Ascending aorta (tissue), 2 donors: ENCODE measurements at regions of chr12 and their contacts with region 1.

Region 1: DNA sequence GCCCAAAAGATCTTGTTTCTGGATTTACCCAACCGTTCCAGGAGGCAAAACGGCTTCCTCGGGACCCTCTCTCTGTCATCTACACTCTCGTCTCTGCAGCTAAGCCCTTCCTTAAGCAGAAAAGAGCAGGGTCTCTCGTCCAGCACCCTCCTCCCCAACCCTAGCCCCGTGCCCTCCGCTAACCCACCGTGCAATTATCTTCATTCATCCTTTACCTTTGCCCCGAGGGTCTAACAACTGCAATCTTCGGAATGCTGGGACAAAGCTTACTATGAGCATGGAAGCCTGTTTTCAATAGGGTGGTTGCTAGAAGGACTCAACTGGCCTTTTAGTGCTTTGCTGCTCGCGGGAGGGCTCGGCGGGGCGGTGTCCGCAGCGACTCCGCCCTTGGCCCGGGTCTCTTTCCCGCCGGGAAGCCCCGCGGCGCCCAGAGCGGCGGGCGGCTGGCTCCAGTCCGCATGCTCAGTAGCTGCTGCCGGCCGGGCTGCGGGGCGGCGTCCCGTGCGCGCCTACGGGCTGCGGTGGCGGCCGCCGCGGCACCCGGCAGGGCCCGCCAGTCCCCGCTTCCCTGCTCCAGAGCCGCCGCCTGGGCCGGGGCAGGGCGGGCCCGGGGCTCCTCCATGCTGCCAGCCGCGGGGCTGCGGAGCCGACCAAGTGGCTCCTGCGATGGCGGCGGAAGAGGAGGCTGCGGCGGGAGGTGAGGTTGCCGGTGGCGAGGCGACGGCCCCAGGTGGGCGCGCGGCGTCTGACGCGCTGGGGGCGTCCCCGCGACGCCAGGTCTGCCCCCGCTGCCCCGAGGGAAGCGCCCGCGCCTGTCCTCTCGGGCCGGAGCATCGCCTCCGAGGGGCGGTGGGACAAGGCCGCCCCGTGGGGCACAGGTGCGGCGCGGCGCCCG is at the start of gene BMAL2:
- DNase-seq: peak in 1 of 2 donors; percentile 69
- H3K4me3 ChIP-seq: peak within 1 kb of the TSS; percentile 86 to 89
- H3K27ac ChIP-seq: peak within 1 kb of the TSS; percentile 14 to 60
- H3K4me1 ChIP-seq: peaks cover 0 to 18% of the 10 kb centered on the region in 2 donors
- H3K27me3 ChIP-seq: no peaks in the 10 kb centered on the region
- CTCF ChIP-seq: no peak
- total RNA-seq, gene BMAL2: 5.6 TPM

Region 2: GRCh38 chr12:26937875-26938700 is 394.6 kb before region 1 on chr12 and contains the starts of genes FGFR1OP2 and INTS13:
- intact Hi-C with region 1: loop called (anchors 5 kb)
- DNase-seq: peak; percentile 97 to 99
- H3K4me3 ChIP-seq: peak within 1 kb of the TSS; percentile 84 to 96
- H3K27ac ChIP-seq: peak within 1 kb of the TSS; percentile 88 to 99
- H3K4me1 ChIP-seq: peaks cover 4 to 37% of the 10 kb centered on the region in 2 donors
- H3K27me3 ChIP-seq: no peaks in the 10 kb centered on the region
- CTCF ChIP-seq: no peak
- total RNA-seq, gene FGFR1OP2: 34.3 TPM
- total RNA-seq, gene INTS13: 47.5 TPM

Region 3: GRCh38 chr12:27343255-27344000 is 10.8 kb after region 1 on chr12:
- intact Hi-C with region 1: no loop called
- DNase-seq: no peak
- H3K4me3 ChIP-seq: no peak overlapping the region
- H3K27ac ChIP-seq: no peak overlapping the region
- H3K4me1 ChIP-seq: no peaks in the 10 kb centered on the region
- H3K27me3 ChIP-seq: no peaks in the 10 kb centered on the region
- CTCF ChIP-seq: no peak

Region 4: DNA sequence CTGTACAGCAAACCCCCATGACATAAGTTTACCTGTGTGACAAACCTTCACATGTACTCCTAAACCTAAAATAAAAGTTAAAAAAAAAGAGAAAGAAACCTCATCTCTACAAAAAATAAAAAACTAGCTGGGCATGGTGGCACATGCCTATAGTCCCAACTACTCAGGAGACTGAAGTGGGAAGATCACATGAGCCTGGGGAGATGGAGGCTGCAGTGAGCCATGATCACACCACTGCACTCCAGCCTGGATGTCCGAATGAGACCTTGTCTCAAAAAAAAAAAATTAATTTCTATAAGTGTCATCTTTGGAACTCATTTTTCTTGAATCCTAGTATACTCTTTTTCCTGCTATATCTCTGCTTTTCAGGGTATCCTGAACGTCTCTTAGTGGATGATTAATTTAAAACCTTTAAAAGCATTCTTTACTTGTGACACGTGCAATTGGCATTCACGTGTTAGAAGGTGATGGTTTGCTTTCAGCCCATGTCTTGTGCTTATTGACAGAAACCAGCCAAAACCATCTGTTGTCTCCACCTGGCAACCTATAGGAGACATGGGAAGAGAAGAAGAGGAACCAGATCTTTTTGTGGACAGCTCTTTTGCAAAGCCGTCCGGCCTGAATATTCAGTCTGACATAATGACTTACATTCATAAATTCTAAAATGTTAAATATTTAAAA is 160.7 kb after region 1 on chr12:
- intact Hi-C with region 1: no loop called
- DNase-seq: no peak
- H3K4me3 ChIP-seq: no peak overlapping the region
- H3K27ac ChIP-seq: no peak overlapping the region
- H3K4me1 ChIP-seq: no peaks in the 10 kb centered on the region
- H3K27me3 ChIP-seq: no peaks in the 10 kb centered on the region
- CTCF ChIP-seq: no peak

Region 5: DNA sequence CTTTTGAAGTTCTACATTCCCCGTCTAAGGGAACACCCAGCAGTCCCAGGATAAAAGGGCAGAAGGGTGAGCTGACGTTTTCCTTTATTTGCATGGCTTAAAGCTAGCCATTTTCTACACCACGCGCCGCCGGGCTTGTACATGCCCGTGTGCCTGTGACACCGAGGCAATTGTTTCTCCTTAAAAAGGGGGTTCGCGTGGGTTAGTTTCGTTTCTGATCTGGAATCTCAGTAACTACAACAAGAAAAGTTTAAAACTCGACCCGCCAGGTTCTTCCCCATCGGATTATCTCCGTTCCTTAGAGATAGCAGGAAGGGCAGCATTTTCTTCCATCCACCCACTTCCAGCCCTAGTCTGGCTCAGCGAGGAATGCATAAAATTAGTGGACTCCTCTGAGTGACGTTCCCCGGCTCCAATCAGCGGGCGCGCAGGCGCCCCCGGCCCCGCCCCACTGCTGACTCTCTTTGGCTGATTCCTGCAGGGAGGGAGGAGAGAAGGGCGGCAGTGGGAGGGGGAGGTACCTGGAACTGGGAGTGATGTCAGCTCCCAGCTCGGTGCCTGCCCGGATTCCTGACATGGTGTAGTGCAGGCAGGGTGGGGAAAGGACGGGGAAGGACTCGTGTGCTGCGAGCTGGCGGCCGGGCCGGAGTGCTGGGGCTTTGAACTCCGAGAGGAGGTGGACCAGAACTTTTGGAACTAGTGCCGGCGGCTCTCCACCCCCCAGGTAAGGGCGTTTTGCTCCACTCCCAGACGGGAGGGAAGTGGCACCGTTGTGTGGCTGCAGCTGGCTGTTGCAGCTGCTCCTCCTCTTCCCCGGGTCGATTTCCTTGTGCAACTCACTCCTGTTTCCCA is 191.2 kb after region 1 on chr12 and contains the start of gene PPFIBP1:
- intact Hi-C with region 1: loop called (anchors 10 kb)
- DNase-seq: peak; percentile 99 to 100
- H3K4me3 ChIP-seq: peak within 1 kb of the TSS; percentile 77 to 79
- H3K27ac ChIP-seq: peak within 1 kb of the TSS; percentile 88 to 90
- H3K4me1 ChIP-seq: peaks cover 3 to 16% of the 10 kb centered on the region in 2 donors
- H3K27me3 ChIP-seq: no peaks in the 10 kb centered on the region
- CTCF ChIP-seq: peak in 2 of 3 experiments; percentile 31 to 44
- total RNA-seq, gene PPFIBP1: 56.4 TPM

Region 6: GRCh38 chr12:27652174-27652763 is 319.6 kb after region 1 on chr12:
- intact Hi-C with region 1: loop called (anchors 5 kb)
- DNase-seq: no peak
- H3K4me3 ChIP-seq: no peak overlapping the region
- H3K27ac ChIP-seq: peak overlapping the region in 1 of 2 donors; percentile 2
- H3K4me1 ChIP-seq: peaks cover 0 to 14% of the 10 kb centered on the region in 2 donors
- H3K27me3 ChIP-seq: no peaks in the 10 kb centered on the region
- CTCF ChIP-seq: peak; percentile 74 to 85 (median 79)

Region 7: GRCh38 chr12:27703710-27704452 is 371.2 kb after region 1 on chr12:
- intact Hi-C with region 1: loop called (anchors 5 kb)
- DNase-seq: peak in 1 of 2 donors; percentile 87
- H3K4me3 ChIP-seq: no peak overlapping the region
- H3K27ac ChIP-seq: no peak overlapping the region
- H3K4me1 ChIP-seq: peaks cover 0 to 4% of the 10 kb centered on the region in 2 donors
- H3K27me3 ChIP-seq: no peaks in the 10 kb centered on the region
- CTCF ChIP-seq: peak; percentile 65 to 84 (median 80)